GM12878 (cell line): ENCODE measurements at regions of chr3 and their contacts with region 1.

Region 1: GRCh38 chr3:4986782-4987537 is 7.7 kb downstream of the BHLHE40 start:
- DNase-seq: no peak
- ATAC-seq: peak; percentile 69
- H3K4me3 ChIP-seq: peak overlapping the region; percentile 70
- H3K27ac ChIP-seq: peak overlapping the region; percentile 86
- H3K4me1 ChIP-seq: peaks cover 38% of the 10 kb centered on the region
- H3K27me3 ChIP-seq: no peaks in the 10 kb centered on the region
- CTCF ChIP-seq: no peak
- EP300 ChIP-seq: 0 out of 4 replicates have a peak, but pooled peaks of 1 of the 2 experiments have one; percentile 58
- POLR2A ChIP-seq: peak; percentile 92
- RAD21 ChIP-seq: no peak; the same call in 1 of the 2 replicates

Region 2: GRCh38 chr3:4751502-4752101 is 235.4 kb before region 1 on chr3:
- CTCF ChIA-PET with region 1: interaction called, 7 read pairs
- POLR2A ChIA-PET with region 1: interaction called, 230 read pairs
- RAD21 ChIA-PET with region 1: interaction called, 342 read pairs
- SMC1A ChIA-PET with region 1: interaction called, 15 read pairs
- in situ Hi-C with region 1: loop called (anchors 5 kb)
- intact Hi-C with region 1: no loop called
- DNase-seq: no peak
- ATAC-seq: peak; percentile 3
- H3K4me3 ChIP-seq: peak overlapping the region; percentile 65
- H3K27ac ChIP-seq: peak overlapping the region; percentile 95
- H3K4me1 ChIP-seq: peaks cover 71% of the 10 kb centered on the region
- H3K27me3 ChIP-seq: no peaks in the 10 kb centered on the region
- CTCF ChIP-seq: no peak
- EP300 ChIP-seq: peak in 1 of 2 experiments; percentile 4; a peak in 1 of 4 replicates
- POLR2A ChIP-seq: no peak
- RAD21 ChIP-seq: no peak

Region 3: GRCh38 chr3:4797201-4797705 is 189.7 kb before region 1 on chr3:
- CTCF ChIA-PET with region 1: no interaction called
- POLR2A ChIA-PET with region 1: no interaction called
- RAD21 ChIA-PET with region 1: no interaction called
- SMC1A ChIA-PET with region 1: no interaction called
- in situ Hi-C with region 1: no loop called
- intact Hi-C with region 1: no loop called
- DNase-seq: no peak
- ATAC-seq: no peak
- H3K4me3 ChIP-seq: no peak overlapping the region
- H3K27ac ChIP-seq: no peak overlapping the region
- H3K4me1 ChIP-seq: no peaks in the 10 kb centered on the region
- H3K27me3 ChIP-seq: no peaks in the 10 kb centered on the region
- CTCF ChIP-seq: no peak
- EP300 ChIP-seq: no peak
- POLR2A ChIP-seq: no peak
- RAD21 ChIP-seq: no peak

Region 4: GRCh38 chr3:4826237-4827100 is 160.5 kb before region 1 on chr3:
- CTCF ChIA-PET with region 1: interaction called, 6 read pairs
- POLR2A ChIA-PET with region 1: interaction called, 6 read pairs
- RAD21 ChIA-PET with region 1: interaction called, 325 read pairs
- SMC1A ChIA-PET with region 1: interaction called, 129 read pairs
- in situ Hi-C with region 1: no loop called
- intact Hi-C with region 1: no loop called
- DNase-seq: no peak
- ATAC-seq: peak; percentile 9
- H3K4me3 ChIP-seq: no peak overlapping the region
- H3K27ac ChIP-seq: no peak overlapping the region
- H3K4me1 ChIP-seq: peaks cover 21% of the 10 kb centered on the region
- H3K27me3 ChIP-seq: no peaks in the 10 kb centered on the region
- CTCF ChIP-seq: no peak
- EP300 ChIP-seq: no peak
- POLR2A ChIP-seq: peak; percentile 31; the same call in 1 of the 2 replicates
- RAD21 ChIP-seq: no peak

Region 5: GRCh38 chr3:4972652-4973643 is 14.0 kb before region 1 on chr3:
- CTCF ChIA-PET with region 1: interaction called, 330 read pairs
- POLR2A ChIA-PET with region 1: interaction called, 3 read pairs
- RAD21 ChIA-PET with region 1: interaction called, 45 read pairs
- SMC1A ChIA-PET with region 1: interaction called, 16 read pairs
- in situ Hi-C with region 1: no loop called
- intact Hi-C with region 1: no loop called
- DNase-seq: peak; percentile 68
- ATAC-seq: peak; percentile 23
- H3K4me3 ChIP-seq: peak overlapping the region; percentile 37; the same call in 1 of the 2 replicates
- H3K27ac ChIP-seq: peak overlapping the region; percentile 45
- H3K4me1 ChIP-seq: peaks cover 29% of the 10 kb centered on the region
- H3K27me3 ChIP-seq: no peaks in the 10 kb centered on the region
- CTCF ChIP-seq: no peak
- EP300 ChIP-seq: peak; percentile 60 to 86; a peak in 3 of 4 replicates
- POLR2A ChIP-seq: no peak
- RAD21 ChIP-seq: no peak

Region 6: DNA sequence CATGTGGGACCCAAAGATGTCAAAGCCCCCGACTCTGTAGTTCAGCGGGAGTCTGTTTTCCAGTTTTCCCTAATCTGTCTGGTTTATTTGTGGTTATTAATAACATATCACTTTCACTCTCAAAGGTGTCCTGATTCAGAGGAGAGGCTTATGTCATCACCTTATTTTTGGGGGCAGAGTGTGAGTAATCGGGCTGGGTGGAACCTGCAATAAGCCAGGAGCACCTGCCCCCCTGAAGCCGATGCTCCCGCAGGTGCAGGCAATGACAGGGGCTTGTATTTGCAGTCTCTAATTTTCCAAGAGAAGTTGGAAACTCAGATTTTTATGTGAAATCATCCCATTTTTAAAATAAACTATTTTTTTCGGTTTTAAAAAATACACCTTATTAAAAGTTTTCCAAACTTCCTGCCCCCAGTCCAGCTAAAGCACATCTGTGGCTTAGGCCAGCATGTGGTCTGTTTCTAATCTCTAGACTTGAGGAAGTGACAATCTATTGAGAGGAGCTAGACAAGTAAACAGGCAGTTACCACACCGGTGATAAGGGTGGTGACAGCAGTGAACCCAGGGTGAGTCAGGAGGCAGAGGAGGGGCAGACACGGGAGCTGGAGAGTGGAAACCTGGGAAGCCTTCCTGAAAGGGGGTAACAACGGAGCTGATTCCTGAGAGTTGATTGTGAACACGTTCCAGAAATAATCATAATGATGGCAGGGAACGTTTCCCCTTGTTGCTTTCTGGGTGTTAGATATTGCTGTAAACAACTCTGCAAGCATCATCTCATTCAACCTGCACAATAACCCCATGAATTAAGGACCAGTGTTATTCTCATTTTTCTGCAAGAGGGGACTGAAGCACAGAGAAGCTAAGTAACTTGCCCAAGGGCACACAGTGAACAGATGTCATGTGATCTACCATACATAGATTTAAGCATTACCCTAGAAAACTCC is 29.5 kb after region 1 on chr3:
- CTCF ChIA-PET with region 1: interaction called, 330 read pairs
- POLR2A ChIA-PET with region 1: interaction called, 94 read pairs
- RAD21 ChIA-PET with region 1: interaction called, 421 read pairs
- SMC1A ChIA-PET with region 1: interaction called, 163 read pairs
- in situ Hi-C with region 1: no loop called
- intact Hi-C with region 1: no loop called
- DNase-seq: no peak
- ATAC-seq: peak; percentile 63
- H3K4me3 ChIP-seq: no peak overlapping the region
- H3K27ac ChIP-seq: no peak overlapping the region
- H3K4me1 ChIP-seq: peaks cover 43% of the 10 kb centered on the region
- H3K27me3 ChIP-seq: no peaks in the 10 kb centered on the region
- CTCF ChIP-seq: no peak
- EP300 ChIP-seq: peak; percentile 69 to 76; a peak in 2 of 4 replicates
- POLR2A ChIP-seq: no peak
- RAD21 ChIP-seq: no peak

Region 7: DNA sequence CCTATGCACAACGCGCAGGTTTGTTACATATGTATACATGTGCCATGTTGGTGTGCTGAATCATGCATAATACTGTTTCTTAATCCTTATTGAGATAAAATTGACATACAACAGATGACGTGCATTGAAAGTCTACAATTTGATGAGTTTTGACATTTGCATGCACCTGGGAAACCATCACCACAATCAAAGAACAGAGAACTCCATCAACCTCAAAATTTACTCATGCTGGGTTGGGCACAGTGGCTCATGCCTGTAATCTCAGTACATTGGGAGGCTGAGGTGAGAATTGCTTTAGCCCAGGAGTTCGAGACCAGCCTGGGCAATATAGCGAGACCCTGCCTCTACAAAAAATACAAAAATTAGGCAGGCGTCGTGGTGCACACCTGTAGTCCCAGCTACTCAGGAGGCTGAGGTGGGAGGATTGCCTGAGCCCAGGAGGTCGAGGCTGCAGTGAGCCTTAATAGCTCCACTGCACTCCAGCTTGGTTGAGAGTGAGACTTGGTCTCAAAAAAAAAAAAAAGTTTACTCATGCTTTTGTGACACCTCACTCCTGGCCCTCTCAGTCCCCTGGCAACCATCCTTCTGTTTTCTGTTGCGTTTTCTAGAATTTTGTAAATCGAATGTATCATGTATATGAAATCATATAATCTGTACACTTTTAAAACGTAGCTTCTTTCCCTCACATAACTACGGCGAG is 48.9 kb after region 1 on chr3:
- CTCF ChIA-PET with region 1: interaction called, 5 read pairs
- POLR2A ChIA-PET with region 1: interaction called, 4 read pairs
- RAD21 ChIA-PET with region 1: interaction called, 6 read pairs
- SMC1A ChIA-PET with region 1: interaction called, 12 read pairs
- in situ Hi-C with region 1: no loop called
- intact Hi-C with region 1: no loop called
- DNase-seq: no peak
- ATAC-seq: peak; percentile 72
- H3K4me3 ChIP-seq: no peak overlapping the region
- H3K27ac ChIP-seq: no peak overlapping the region
- H3K4me1 ChIP-seq: peaks cover 14% of the 10 kb centered on the region
- H3K27me3 ChIP-seq: no peaks in the 10 kb centered on the region
- CTCF ChIP-seq: no peak
- EP300 ChIP-seq: no peak
- POLR2A ChIP-seq: no peak
- RAD21 ChIP-seq: no peak

Region 8: GRCh38 chr3:5151586-5151985 is 164.6 kb after region 1 on chr3:
- CTCF ChIA-PET with region 1: no interaction called
- POLR2A ChIA-PET with region 1: no interaction called
- RAD21 ChIA-PET with region 1: no interaction called
- SMC1A ChIA-PET with region 1: no interaction called
- in situ Hi-C with region 1: no loop called
- intact Hi-C with region 1: no loop called
- DNase-seq: no peak
- ATAC-seq: peak; percentile 55
- H3K4me3 ChIP-seq: no peak overlapping the region
- H3K27ac ChIP-seq: no peak overlapping the region; the same call in 1 of the 2 replicates
- H3K4me1 ChIP-seq: peaks cover 11% of the 10 kb centered on the region
- H3K27me3 ChIP-seq: no peaks in the 10 kb centered on the region
- CTCF ChIP-seq: no peak
- EP300 ChIP-seq: no peak
- POLR2A ChIP-seq: no peak
- RAD21 ChIP-seq: no peak

Region 9: GRCh38 chr3:5194341-5195159 is 207.6 kb after region 1 on chr3:
- CTCF ChIA-PET with region 1: no interaction called
- POLR2A ChIA-PET with region 1: interaction called, 3 read pairs
- RAD21 ChIA-PET with region 1: interaction called, 5 read pairs
- SMC1A ChIA-PET with region 1: interaction called, 10 read pairs
- in situ Hi-C with region 1: no loop called
- intact Hi-C with region 1: no loop called
- DNase-seq: no peak
- ATAC-seq: peak; percentile 49
- H3K4me3 ChIP-seq: peak overlapping the region; percentile 39; the same call in 1 of the 2 replicates
- H3K27ac ChIP-seq: peak overlapping the region; percentile 94
- H3K4me1 ChIP-seq: peaks cover 57% of the 10 kb centered on the region
- H3K27me3 ChIP-seq: no peaks in the 10 kb centered on the region
- CTCF ChIP-seq: no peak
- EP300 ChIP-seq: no peak
- POLR2A ChIP-seq: peak; percentile 20; the same call in 1 of the 2 replicates
- RAD21 ChIP-seq: no peak